Breast epithelium (tissue), 4 donors: ENCODE measurements at regions of chr14 and their contacts with region 1.

Region 1: GRCh38 chr14:89231426-89232113 is 185.5 kb downstream of the FOXN3 start:
- DNase-seq: no peak
- H3K4me3 ChIP-seq: no peak overlapping the region
- H3K27ac ChIP-seq: no peak overlapping the region
- H3K4me1 ChIP-seq: no peaks in the 10 kb centered on the region
- H3K27me3 ChIP-seq: no peaks in the 10 kb centered on the region
- CTCF ChIP-seq: no peak
- POLR2A ChIP-seq: no peak

Region 2: DNA sequence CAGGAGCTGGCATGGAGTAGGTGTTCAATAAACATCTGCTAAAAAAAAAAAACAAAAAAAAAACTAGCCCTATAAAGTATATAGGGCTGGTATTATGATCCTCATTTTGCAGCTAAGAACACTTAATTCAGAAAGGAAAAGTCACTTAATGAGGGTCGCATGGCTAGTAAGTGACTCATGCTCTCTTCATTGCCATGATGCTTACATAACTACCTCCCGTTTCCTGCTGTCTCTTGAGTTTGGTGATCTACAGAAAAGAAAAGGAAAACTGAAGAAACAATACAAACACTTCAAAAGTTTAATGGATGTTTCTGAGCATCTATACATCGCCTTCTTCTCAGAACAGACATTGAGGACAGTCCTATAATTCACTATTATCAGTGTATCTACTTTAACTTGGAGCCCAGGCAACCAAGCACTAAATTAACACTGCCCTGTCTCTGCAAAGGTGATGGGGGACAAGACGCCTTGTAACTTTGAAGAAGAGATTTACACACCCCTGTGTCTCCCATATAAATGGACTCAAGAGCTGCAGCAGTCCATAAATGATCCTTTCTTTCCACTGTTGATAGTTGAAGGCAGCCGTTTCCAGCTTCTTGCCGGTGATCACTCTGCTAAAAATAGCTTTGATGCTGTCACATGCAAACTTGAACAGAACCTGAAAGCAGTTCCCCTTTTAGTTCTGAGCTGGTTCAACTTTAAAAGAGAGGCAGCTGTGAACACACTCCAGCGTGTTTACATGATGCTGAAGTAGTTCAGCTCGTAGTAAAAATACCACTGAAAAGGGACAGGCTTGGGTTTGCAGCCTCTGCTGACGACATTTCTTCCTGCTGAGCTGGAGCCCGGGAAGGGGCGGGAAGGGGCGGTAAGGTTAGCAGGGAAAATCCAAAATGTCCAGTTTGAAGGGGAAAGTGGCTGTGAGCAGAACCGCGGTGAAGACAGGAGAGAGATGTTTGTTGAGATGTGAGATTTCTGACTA is 72.2 kb after region 1 on chr14:
- intact Hi-C with region 1: loop called (anchors 2 kb)
- DNase-seq: peak in 1 of 2 donors; percentile 18
- H3K4me3 ChIP-seq: peak overlapping the region in 1 of 3 donors; percentile 42
- H3K27ac ChIP-seq: peak overlapping the region; percentile 76 to 88
- H3K4me1 ChIP-seq: peaks cover 0 to 3% of the 10 kb centered on the region in 2 donors
- H3K27me3 ChIP-seq: no peaks in the 10 kb centered on the region
- CTCF ChIP-seq: no peak
- POLR2A ChIP-seq: no peak